ENCODE measurements at regions of chrX and their contacts with region 1.

Region 1: GRCh38 chrX:129139837-129140598 is 383.3 kb downstream of the SMARCA1 start:
- DNase-seq: no peak
- H3K4me3 ChIP-seq: no peak overlapping the region
- H3K4me3 Mint-ChIP-seq: no peak overlapping the region
- H3K27ac Mint-ChIP-seq: no peak overlapping the region
- H3K4me1 ChIP-seq: peaks cover 16% of the 10 kb centered on the region
- H3K4me1 Mint-ChIP-seq: peaks cover 10% of the 10 kb centered on the region
- H3K27me3 ChIP-seq: no peaks in the 10 kb centered on the region
- H3K27me3 Mint-ChIP-seq: no peaks in the 10 kb centered on the region
- CTCF ChIP-seq: no peak

Region 2: GRCh38 chrX:129058405-129058804 is 81.6 kb before region 1 on chrX:
- CTCF ChIA-PET with region 1: no interaction called
- POLR2A ChIA-PET with region 1: no interaction called
- intact Hi-C with region 1: no loop called
- DNase-seq: no peak
- H3K4me3 ChIP-seq: no peak overlapping the region
- H3K4me3 Mint-ChIP-seq: no peak overlapping the region
- H3K27ac Mint-ChIP-seq: no peak overlapping the region
- H3K4me1 ChIP-seq: no peaks in the 10 kb centered on the region
- H3K4me1 Mint-ChIP-seq: no peaks in the 10 kb centered on the region
- H3K27me3 ChIP-seq: no peaks in the 10 kb centered on the region
- H3K27me3 Mint-ChIP-seq: no peaks in the 10 kb centered on the region
- CTCF ChIP-seq: no peak

Region 3: DNA sequence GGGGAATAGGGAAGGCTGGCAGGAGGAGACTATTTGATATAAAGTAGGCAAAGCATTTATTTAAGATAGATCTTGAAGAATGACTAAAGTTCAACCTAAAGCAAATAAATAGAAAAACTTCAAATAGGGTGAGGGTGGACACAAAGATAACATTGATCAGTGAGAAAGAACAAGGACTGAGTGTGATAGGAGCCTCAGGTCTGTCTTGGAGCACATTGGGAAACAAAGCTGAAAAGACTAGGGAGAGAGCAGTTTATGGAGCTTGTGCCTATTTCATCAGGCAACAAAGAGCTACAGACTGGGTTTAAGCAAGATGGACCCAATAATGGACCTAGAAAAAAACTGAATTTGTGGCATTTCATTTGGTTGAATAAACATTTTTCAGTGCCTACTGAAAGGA is 42.4 kb before region 1 on chrX:
- CTCF ChIA-PET with region 1: no interaction called
- POLR2A ChIA-PET with region 1: no interaction called
- intact Hi-C with region 1: loop called (anchors 1 kb)
- DNase-seq: no peak
- H3K4me3 ChIP-seq: no peak overlapping the region
- H3K4me3 Mint-ChIP-seq: no peak overlapping the region
- H3K27ac Mint-ChIP-seq: no peak overlapping the region
- H3K4me1 ChIP-seq: no peaks in the 10 kb centered on the region
- H3K4me1 Mint-ChIP-seq: peaks cover 9% of the 10 kb centered on the region
- H3K27me3 ChIP-seq: no peaks in the 10 kb centered on the region
- H3K27me3 Mint-ChIP-seq: no peaks in the 10 kb centered on the region
- CTCF ChIP-seq: no peak